Heart right ventricle (tissue), 16 donors: ENCODE measurements at regions of chr7 and their contacts with region 1.

Region 1: GRCh38 chr7:94087664-94088352 is 83.7 kb upstream of the BET1 start:
- DNase-seq: peak in 1 of 2 donors; percentile 51
- ATAC-seq: peak in 7 of 8 donors; percentile 71 to 84 (median 76)
- H3K4me3 ChIP-seq: peak overlapping the region in 6 of 10 donors; percentile 29 to 42 (median 36)
- H3K27ac ChIP-seq: peak overlapping the region in 2 of 10 donors; percentile 40 to 45
- H3K4me1 ChIP-seq: peaks cover 0 to 18% (median 8%) of the 10 kb centered on the region in 9 donors
- H3K27me3 ChIP-seq: peaks cover 0 to 3% (median 0%) of the 10 kb centered on the region in 7 donors
- CTCF ChIP-seq: peak; percentile 46 to 88 (median 80)

Region 2: GRCh38 chr7:93622036-93623033 is 465.5 kb before region 1 on chr7:
- intact Hi-C with region 1: loop called in 2 of 10 experiments (anchors 5 kb)
- DNase-seq: no peak
- ATAC-seq: peak in 7 of 8 donors; percentile 28 to 78 (median 57)
- H3K4me3 ChIP-seq: peak overlapping the region in 2 of 10 donors; percentile 20 to 31
- H3K27ac ChIP-seq: no peak overlapping the region
- H3K4me1 ChIP-seq: no peaks in the 10 kb centered on the region
- H3K27me3 ChIP-seq: no peaks in the 10 kb centered on the region
- CTCF ChIP-seq: peak in 8 of 9 donors; percentile 3 to 59 (median 34)

Region 3: GRCh38 chr7:93817526-93817925 is 270.3 kb before region 1 on chr7:
- intact Hi-C with region 1: loop called in 1 of 10 experiments (anchors 10 kb)
- DNase-seq: no peak
- ATAC-seq: no peak
- H3K4me3 ChIP-seq: no peak overlapping the region
- H3K27ac ChIP-seq: no peak overlapping the region
- H3K4me1 ChIP-seq: no peaks in the 10 kb centered on the region
- H3K27me3 ChIP-seq: no peaks in the 10 kb centered on the region
- CTCF ChIP-seq: no peak

Region 4: DNA sequence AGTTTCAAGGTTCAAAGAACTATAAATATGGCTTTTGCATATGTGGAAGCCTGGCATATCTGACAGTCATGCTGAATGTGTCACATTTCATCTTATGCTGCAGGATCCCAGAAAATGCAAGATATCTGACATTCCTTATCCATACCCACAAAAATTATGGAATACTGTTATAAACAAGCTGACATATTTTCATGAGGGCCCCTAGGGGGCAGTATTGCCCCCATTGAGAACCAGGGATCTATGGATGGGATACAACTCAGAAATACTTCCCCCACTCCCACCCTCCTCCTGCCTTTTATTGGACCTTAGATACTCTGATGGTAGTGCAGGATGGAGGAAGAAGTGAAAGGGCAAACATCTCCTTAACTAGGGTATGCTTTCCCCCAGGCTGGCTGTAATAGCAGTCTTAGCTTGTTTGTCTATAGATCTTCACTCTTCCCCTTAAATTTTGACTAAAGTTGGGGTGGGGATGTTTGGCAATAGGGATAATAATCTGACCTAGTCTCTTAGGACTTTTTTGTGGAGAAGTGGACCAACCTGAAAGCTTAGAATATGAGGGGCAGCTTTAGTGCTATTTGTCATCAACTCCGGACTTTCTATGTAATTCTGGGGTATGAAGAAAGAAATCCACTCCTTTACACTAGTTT is 184.9 kb before region 1 on chr7:
- intact Hi-C with region 1: loop called in 9 of 10 experiments (anchors 1 to 5 kb)
- DNase-seq: peak in 1 of 2 donors; percentile 36
- ATAC-seq: peak in 7 of 8 donors; percentile 20 to 71 (median 66)
- H3K4me3 ChIP-seq: no peak overlapping the region
- H3K27ac ChIP-seq: no peak overlapping the region
- H3K4me1 ChIP-seq: peaks cover 0 to 8% (median 0%) of the 10 kb centered on the region in 9 donors
- H3K27me3 ChIP-seq: peaks cover 0 to 4% (median 0%) of the 10 kb centered on the region in 7 donors
- CTCF ChIP-seq: peak; percentile 65 to 91 (median 78)

Region 5: DNA sequence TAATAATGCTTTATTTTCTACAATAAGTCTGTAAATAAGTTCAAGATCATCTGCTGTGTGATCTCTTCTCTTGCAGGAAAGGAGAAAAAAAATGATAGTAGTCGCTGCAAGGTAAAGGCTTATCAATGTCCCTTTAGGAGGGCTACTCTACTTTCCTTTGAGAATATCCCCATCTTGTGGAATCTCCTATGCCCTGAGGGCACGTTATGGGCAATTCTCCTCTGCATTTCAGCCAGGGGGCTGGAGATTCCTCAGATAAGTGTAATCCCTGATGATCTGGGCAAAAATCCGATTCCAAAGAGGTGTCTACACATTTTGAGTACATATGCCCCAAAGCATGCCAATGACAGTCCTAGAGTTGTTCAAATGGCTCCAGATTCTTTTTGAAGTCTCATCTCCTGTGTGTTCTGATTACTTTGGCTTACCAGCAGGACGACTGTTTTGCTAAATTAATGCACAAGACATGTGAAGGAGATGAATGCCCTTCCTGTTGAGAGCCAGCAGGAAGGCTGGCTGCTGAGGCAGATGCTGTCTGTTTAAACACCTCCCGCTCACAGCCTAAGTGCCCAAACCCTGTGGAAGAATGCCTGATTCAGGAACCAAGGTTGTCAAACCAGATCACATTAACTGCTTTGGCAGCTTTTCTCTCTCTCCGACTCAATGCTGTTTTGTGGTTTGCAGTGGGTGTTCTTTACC is 135.7 kb after region 1 on chr7:
- intact Hi-C with region 1: loop called in 3 of 10 experiments (anchors 10 kb)
- DNase-seq: no peak
- ATAC-seq: peak in 3 of 8 donors; percentile 55 to 74 (median 63)
- H3K4me3 ChIP-seq: no peak overlapping the region
- H3K27ac ChIP-seq: no peak overlapping the region
- H3K4me1 ChIP-seq: peaks cover 0 to 3% (median 0%) of the 10 kb centered on the region in 9 donors
- H3K27me3 ChIP-seq: no peaks in the 10 kb centered on the region
- CTCF ChIP-seq: peak in 8 of 9 donors; percentile 13 to 65 (median 54)